ENCODE measurements at regions of chr11 and their contacts with region 1.

Region 1: DNA sequence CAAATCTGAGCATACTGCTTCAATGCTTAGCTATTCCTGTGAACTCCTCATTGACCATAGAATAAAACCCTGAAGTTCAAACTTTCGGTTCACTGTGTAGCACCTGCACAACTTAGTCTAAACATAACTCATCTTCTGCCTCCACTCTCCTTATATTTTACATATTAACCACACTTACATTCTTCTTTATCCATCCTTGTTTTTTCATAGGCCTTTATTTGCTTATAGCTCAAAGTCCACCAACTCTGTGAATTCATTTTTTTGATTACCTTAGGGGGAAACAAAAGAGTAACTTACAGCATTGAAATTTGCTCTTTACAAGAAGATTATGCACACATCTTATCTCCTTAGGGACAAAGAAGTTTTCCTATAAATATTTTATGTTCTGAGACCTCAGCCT is 521.6 kb upstream of the FAT3 start:
- DNase-seq: peak in 1 of 2 experiments; percentile 21
- H3K4me3 ChIP-seq: no peak overlapping the region
- H3K4me3 Mint-ChIP-seq: peak overlapping the region; percentile 12
- H3K27ac Mint-ChIP-seq: peak overlapping the region; percentile 4
- H3K4me1 ChIP-seq: peaks cover 36% of the 10 kb centered on the region
- H3K4me1 Mint-ChIP-seq: peaks cover 21% of the 10 kb centered on the region
- H3K27me3 ChIP-seq: no peaks in the 10 kb centered on the region
- H3K27me3 Mint-ChIP-seq: no peaks in the 10 kb centered on the region
- CTCF ChIP-seq: no peak

Region 2: DNA sequence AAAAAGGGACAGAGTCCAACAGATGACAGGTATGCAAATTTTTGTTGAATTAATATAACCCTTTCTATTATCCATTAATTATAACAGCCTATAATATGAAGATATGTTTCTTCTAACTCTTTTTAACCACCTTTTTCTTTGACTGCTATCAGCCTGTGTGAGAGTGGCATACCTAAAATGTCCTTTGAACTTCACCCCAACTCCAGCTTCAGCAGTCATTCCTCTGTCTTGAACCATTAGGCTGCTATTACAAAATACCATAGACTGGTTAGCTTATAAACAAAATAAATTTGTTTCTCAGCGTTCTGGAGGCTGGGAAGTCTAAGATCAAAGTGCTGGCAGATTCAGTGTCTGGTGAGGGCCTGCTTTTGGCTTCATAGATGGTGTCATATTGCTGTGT is 43.0 kb before region 1 on chr11:
- CTCF ChIA-PET with region 1: no interaction called
- POLR2A ChIA-PET with region 1: no interaction called
- intact Hi-C with region 1: loop called (anchors 2 kb)
- DNase-seq: no peak
- H3K4me3 ChIP-seq: no peak overlapping the region
- H3K4me3 Mint-ChIP-seq: no peak overlapping the region
- H3K27ac Mint-ChIP-seq: no peak overlapping the region
- H3K4me1 ChIP-seq: peaks cover 7% of the 10 kb centered on the region
- H3K4me1 Mint-ChIP-seq: peaks cover 11% of the 10 kb centered on the region
- H3K27me3 ChIP-seq: no peaks in the 10 kb centered on the region
- H3K27me3 Mint-ChIP-seq: no peaks in the 10 kb centered on the region
- CTCF ChIP-seq: no peak

Region 3: GRCh38 chr11:91731066-91731465 is 28.0 kb after region 1 on chr11:
- CTCF ChIA-PET with region 1: no interaction called
- POLR2A ChIA-PET with region 1: no interaction called
- intact Hi-C with region 1: loop called (anchors 1 kb)
- DNase-seq: peak; percentile 57 to 68
- H3K4me3 ChIP-seq: no peak overlapping the region
- H3K4me3 Mint-ChIP-seq: peak overlapping the region; percentile 63
- H3K27ac Mint-ChIP-seq: peak overlapping the region; percentile 63
- H3K4me1 ChIP-seq: peaks cover 30% of the 10 kb centered on the region
- H3K4me1 Mint-ChIP-seq: peaks cover 38% of the 10 kb centered on the region
- H3K27me3 ChIP-seq: no peaks in the 10 kb centered on the region
- H3K27me3 Mint-ChIP-seq: no peaks in the 10 kb centered on the region
- CTCF ChIP-seq: no peak

Region 4: DNA sequence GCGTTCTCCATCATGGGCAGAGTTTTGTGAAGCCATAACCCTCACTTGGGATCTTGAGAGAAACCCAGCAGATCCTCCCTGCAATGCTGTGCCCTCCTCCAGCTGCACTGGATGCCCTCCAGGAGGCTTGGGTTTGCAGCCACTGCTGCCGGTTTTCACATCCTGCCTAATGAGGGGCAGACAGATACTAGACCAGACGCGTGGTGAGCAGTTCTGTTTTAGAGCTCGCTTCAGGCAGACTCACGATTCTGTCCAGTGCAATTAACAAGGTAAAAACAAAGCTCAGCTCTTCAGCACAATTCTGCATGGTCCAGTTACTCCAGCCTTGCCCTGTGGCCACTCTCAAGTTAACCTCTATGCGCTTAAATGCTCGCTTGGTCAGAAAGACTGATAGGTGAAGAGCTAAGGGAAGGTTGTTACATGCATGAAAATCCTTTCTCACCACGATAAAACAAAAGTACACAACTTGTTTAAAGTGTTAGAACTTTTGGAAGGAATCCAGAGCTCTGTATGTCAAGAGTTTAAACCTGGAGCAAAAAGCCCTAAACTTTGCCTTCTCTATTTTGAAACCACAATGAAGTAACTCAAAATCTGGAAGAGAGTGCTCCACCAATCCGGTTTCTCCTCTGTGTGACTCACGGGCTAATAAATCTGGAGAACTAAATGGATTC is 229.2 kb after region 1 on chr11:
- CTCF ChIA-PET with region 1: no interaction called
- POLR2A ChIA-PET with region 1: no interaction called
- intact Hi-C with region 1: no loop called
- DNase-seq: no peak
- H3K4me3 ChIP-seq: no peak overlapping the region
- H3K4me3 Mint-ChIP-seq: no peak overlapping the region
- H3K27ac Mint-ChIP-seq: no peak overlapping the region
- H3K4me1 ChIP-seq: no peaks in the 10 kb centered on the region
- H3K4me1 Mint-ChIP-seq: no peaks in the 10 kb centered on the region
- H3K27me3 ChIP-seq: 0 out of 2 replicates have a peak, but pooled peaks cover 2% of the 10 kb centered on the region
- H3K27me3 Mint-ChIP-seq: no peaks in the 10 kb centered on the region
- CTCF ChIP-seq: no peak